Activated CD4-positive, alpha-beta T cell treated with anti-CD3 and anti-CD28 coated beads for 36 hours (primary cell): ENCODE measurements at regions of chr3 and their contacts with region 1.

Region 1: DNA sequence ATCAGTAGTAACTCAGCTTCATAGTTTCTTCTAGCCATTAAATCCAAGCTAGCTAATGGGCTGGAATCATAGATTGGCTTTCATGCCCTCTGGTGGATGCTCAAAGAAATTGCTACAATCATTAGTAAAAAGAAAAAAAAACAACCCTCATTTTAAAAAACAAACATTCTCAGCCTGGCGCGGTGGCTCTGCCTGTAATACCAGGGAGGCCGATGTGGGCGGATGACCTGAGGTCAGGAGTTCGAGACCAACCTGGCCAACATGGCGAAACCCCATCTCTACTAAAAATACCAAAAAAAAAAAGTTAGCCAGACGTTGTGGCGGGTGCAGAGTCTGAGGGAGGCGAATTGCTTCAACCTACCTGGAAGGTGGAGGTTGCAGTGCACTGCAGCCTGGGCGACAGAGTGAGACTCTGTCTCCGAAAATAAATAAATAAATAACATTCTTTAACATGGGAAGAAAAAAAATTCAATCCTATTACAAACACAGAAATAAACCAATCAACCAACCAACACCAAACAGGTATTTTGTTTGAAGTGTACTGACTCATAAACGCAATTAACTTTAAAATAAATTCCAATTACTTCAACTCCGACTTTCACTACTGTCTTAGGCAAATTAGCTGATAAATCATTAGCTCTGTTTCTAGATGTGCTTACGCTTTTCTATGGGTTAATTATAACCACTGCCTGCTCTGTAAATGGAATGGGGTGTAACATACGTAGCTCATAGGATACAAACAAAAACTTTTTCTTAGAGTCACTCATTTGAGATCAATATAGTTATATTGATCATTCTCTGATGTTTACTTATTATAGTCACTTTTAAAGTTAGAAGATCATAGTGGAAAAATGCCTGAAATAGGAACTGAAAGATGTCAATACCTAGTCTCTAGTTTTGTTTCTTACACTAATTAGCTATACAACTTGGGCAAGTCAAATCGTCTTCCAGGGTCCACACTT is 24.9 kb downstream of the TMEM207 start:
- DNase-seq: peak; percentile 69
- ATAC-seq: peak; percentile 72
- H3K4me3 Mint-ChIP-seq: peak overlapping the region; percentile 15
- H3K27ac Mint-ChIP-seq: no peak overlapping the region
- H3K4me1 Mint-ChIP-seq: peaks cover 3% of the 10 kb centered on the region
- H3K27me3 Mint-ChIP-seq: no peaks in the 10 kb centered on the region

Region 2: GRCh38 chr3:189961525-189962161 is 463.1 kb before region 1 on chr3:
- CTCF ChIA-PET with region 1: interaction called, 21 read pairs
- POLR2A ChIA-PET with region 1: no interaction called
- intact Hi-C with region 1: loop called in 1 of 2 experiments (anchors 1 kb)
- DNase-seq: peak; percentile 85
- ATAC-seq: peak; percentile 78
- H3K4me3 Mint-ChIP-seq: no peak overlapping the region
- H3K27ac Mint-ChIP-seq: no peak overlapping the region
- H3K4me1 Mint-ChIP-seq: peaks cover 8% of the 10 kb centered on the region
- H3K27me3 Mint-ChIP-seq: peaks cover 7% of the 10 kb centered on the region

Region 3: GRCh38 chr3:189967254-189967865 is 457.4 kb before region 1 on chr3:
- CTCF ChIA-PET with region 1: interaction called, 21 read pairs
- POLR2A ChIA-PET with region 1: no interaction called
- intact Hi-C with region 1: loop called (anchors 1 kb)
- DNase-seq: no peak
- ATAC-seq: no peak
- H3K4me3 Mint-ChIP-seq: no peak overlapping the region
- H3K27ac Mint-ChIP-seq: no peak overlapping the region
- H3K4me1 Mint-ChIP-seq: peaks cover 2% of the 10 kb centered on the region
- H3K27me3 Mint-ChIP-seq: peaks cover 7% of the 10 kb centered on the region

Region 4: DNA sequence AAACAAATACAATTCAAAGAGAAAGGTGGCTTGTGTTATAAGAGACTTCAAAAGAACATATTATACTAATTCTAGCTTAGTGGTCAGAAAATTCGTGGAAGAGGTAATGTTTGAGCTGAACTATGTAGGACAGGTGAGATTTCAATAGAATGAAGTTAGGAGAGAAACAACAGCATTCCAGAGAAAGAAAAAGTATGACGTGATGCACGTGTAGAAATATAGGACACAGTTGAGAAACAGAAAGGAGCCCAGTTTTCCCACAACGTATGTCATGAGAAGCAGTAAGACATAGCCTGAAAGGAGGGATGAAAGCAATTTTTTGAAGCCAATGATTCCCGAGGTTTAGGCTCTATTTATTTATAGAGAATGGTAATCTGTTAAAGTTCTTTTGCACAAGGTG is 285.4 kb before region 1 on chr3:
- CTCF ChIA-PET with region 1: no interaction called
- POLR2A ChIA-PET with region 1: no interaction called
- intact Hi-C with region 1: no loop called
- DNase-seq: no peak
- ATAC-seq: no peak
- H3K4me3 Mint-ChIP-seq: no peak overlapping the region
- H3K27ac Mint-ChIP-seq: no peak overlapping the region
- H3K4me1 Mint-ChIP-seq: no peaks in the 10 kb centered on the region
- H3K27me3 Mint-ChIP-seq: peaks cover 9% of the 10 kb centered on the region

Region 5: DNA sequence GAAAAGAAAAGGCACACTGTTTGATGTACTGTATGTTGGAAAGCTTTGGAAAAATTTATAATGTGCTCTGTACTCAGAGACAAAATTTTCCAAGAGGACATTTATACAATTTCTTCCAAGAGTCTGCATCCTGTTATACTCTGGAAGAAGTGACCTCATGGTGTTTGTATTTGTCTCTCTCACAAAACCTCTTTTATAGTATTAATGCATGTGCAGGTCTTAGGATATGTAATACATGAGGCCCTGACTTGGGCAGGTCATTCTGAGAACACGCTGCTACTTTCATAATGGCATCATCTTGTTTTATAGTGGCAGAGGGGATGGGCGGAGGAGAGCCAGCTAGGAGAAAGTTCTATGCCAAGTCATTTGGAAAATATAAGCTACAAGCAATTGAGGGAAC is 232.0 kb before region 1 on chr3:
- CTCF ChIA-PET with region 1: no interaction called
- POLR2A ChIA-PET with region 1: no interaction called
- intact Hi-C with region 1: no loop called
- DNase-seq: no peak
- ATAC-seq: no peak
- H3K4me3 Mint-ChIP-seq: no peak overlapping the region
- H3K27ac Mint-ChIP-seq: no peak overlapping the region
- H3K4me1 Mint-ChIP-seq: no peaks in the 10 kb centered on the region
- H3K27me3 Mint-ChIP-seq: no peaks in the 10 kb centered on the region

Region 6: GRCh38 chr3:190224863-190225692 is 199.7 kb before region 1 on chr3:
- CTCF ChIA-PET with region 1: interaction called, 6 read pairs
- POLR2A ChIA-PET with region 1: no interaction called
- intact Hi-C with region 1: loop called (anchors 1 kb)
- DNase-seq: no peak
- ATAC-seq: no peak
- H3K4me3 Mint-ChIP-seq: no peak overlapping the region
- H3K27ac Mint-ChIP-seq: no peak overlapping the region
- H3K4me1 Mint-ChIP-seq: peaks cover 3% of the 10 kb centered on the region
- H3K27me3 Mint-ChIP-seq: peaks cover 4% of the 10 kb centered on the region

Region 7: GRCh38 chr3:190384241-190384863 is 40.4 kb before region 1 on chr3:
- CTCF ChIA-PET with region 1: no interaction called
- POLR2A ChIA-PET with region 1: no interaction called
- intact Hi-C with region 1: loop called in 1 of 2 experiments (anchors 2 kb)
- DNase-seq: peak; percentile 40
- ATAC-seq: peak; percentile 57
- H3K4me3 Mint-ChIP-seq: no peak overlapping the region
- H3K27ac Mint-ChIP-seq: no peak overlapping the region
- H3K4me1 Mint-ChIP-seq: peaks cover 13% of the 10 kb centered on the region
- H3K27me3 Mint-ChIP-seq: peaks cover 17% of the 10 kb centered on the region